ENCODE measurements at regions of chr18 and their contacts with region 1.

Region 1: DNA sequence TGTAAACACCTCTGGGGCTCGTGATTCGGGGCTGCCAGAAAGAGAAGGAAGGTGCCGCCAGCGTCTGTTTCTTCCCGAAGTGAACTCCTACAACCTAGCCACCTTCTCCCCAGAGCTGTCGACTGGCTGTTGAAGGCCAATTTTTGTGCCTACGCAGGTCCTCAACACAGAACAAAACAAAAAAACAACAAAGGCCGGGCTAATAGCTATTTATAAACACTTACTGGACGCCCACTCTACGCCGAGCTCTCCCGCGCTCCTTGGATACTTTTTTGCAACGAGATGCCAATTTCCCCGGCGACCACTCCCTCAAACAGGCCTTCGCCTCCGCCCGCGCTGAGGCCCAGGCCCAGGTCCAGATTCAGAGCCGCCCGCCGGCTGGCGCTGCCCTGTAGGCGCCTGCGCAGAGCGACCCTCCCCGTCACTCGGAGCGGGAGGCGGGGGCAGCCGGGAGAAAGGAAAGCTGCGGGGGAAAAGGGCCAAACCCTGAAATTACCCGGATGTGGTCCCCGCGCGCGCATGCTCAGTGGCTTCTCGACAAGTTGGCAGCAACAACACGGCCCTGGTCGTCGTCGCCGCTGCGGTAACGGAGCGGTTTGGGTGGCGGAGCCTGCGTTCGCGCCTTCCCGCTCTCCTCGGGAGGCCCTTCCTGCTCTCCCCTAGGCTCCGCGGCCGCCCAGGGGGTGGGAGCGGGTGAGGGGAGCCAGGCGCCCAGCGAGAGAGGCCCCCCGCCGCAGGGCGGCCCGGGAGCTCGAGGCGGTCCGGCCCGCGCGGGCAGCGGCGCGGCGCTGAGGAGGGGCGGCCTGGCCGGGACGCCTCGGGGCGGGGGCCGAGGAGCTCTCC is at the start of gene SMAD4:
- DNase-seq: peak; percentile 98
- H3K4me3 ChIP-seq: peak within 1 kb of the TSS; percentile 42 to 86 (median 74)
- H3K27ac ChIP-seq: peak within 1 kb of the TSS; percentile 95 to 99 (median 98)
- H3K4me1 ChIP-seq: peaks cover 0 to 54% (median 49%) of the 10 kb centered on the region in 4 donors
- H3K27me3 ChIP-seq: no peaks in the 10 kb centered on the region
- CTCF ChIP-seq: peak in 1 of 4 experiments; percentile 18
- EP300 ChIP-seq: peak in 1 of 4 donors; percentile 45
- POLR2A ChIP-seq: peak; percentile 92 to 93
- total RNA-seq, gene SMAD4: 106 to 143 (median 122) TPM

Region 2: DNA sequence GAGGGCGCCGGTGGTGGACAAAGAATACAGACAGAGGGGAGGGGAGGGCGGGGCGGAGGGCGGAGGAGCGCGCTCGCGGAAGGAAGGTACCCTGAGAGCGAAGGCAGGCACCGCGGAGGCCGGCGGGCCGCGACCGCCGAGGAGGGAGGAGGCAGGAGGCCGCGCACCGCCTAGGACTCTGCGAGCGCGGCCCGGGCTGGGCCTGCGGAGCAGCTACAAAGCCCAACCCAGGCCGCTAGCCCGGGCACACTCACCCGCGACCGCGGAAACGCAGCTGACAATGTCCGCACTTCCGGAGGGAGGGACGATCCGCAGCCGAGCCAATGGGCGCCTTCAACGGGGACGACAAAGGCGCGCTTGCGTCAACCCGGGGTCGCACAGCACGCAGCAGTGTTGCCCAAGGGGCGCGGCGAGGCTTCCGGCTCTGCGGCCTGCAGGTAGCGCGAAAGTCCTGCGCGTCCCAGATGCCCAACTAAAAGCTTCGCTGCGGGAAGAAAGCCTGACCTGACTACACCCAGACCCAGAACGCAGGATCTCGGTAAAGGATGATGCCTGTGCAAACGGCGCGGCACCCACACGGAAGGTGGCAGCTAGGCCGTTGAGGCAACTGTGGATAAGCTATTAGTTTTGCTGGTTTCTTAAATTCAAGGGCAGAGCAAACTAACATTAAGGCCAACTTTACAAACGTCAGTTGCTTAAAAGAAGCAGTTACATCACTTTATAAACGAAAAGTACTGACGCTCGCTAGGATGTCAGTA is 1542.8 kb before region 1 on chr18 and contains the start of gene C18orf32:
- intact Hi-C with region 1: loop called (anchors 5 kb)
- DNase-seq: peak; percentile 98
- H3K4me3 ChIP-seq: peak within 1 kb of the TSS; percentile 67 to 92 (median 86)
- H3K27ac ChIP-seq: peak within 1 kb of the TSS; percentile 93 to 98 (median 96)
- H3K4me1 ChIP-seq: peaks cover 0 to 46% (median 37%) of the 10 kb centered on the region in 4 donors
- H3K27me3 ChIP-seq: no peaks in the 10 kb centered on the region
- CTCF ChIP-seq: no peak
- EP300 ChIP-seq: no peak
- POLR2A ChIP-seq: peak; percentile 92 to 94
- total RNA-seq, gene C18orf32: 29.1 to 57.8 (median 45.8) TPM

Region 3: DNA sequence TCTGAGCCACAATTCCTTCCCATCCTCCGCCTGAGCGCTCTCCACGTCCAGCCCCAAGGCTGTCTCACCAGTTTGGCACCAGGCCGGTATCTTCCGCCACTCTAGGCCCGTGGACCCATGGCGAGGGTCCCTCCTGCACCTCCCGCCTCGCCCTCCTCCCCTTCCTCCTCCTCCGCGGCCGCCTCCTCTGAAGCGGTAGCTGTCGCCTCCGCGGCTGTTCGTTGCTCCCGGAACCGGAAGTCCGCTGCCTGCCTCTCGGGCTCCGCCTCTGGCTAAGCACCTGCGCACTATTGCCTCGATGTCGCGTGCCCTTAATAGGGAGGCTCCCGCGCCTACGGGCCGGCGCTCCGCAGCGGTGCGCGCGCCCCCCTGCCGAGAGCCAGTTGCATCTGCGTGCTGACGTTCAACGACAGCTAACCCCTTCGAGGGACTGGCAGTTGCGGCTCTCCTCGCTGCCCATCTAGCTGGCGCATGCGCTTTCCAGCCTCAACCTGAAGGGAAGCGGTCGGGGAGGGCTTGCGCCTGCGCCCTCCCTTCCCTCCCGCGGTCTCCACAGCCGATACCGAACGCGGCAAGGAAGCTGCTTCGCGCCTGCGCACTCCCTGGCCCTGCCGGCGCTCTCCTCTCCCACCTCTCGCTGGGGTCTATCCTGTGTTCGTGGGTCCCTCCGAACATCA is 748.5 kb before region 1 on chr18 and contains the start of gene MBD1:
- intact Hi-C with region 1: loop called (anchors 5 kb)
- DNase-seq: peak; percentile 99
- H3K4me3 ChIP-seq: peak within 1 kb of the TSS; percentile 74 to 99 (median 92)
- H3K27ac ChIP-seq: peak within 1 kb of the TSS; percentile 93 to 96 (median 94)
- H3K4me1 ChIP-seq: peaks cover 0 to 34% (median 29%) of the 10 kb centered on the region in 4 donors
- H3K27me3 ChIP-seq: no peaks in the 10 kb centered on the region
- CTCF ChIP-seq: peak in 2 of 4 experiments; percentile 12 to 20
- EP300 ChIP-seq: no peak
- POLR2A ChIP-seq: peak; percentile 91
- total RNA-seq, gene MBD1: 58.9 to 93.6 (median 75.5) TPM

Region 4: DNA sequence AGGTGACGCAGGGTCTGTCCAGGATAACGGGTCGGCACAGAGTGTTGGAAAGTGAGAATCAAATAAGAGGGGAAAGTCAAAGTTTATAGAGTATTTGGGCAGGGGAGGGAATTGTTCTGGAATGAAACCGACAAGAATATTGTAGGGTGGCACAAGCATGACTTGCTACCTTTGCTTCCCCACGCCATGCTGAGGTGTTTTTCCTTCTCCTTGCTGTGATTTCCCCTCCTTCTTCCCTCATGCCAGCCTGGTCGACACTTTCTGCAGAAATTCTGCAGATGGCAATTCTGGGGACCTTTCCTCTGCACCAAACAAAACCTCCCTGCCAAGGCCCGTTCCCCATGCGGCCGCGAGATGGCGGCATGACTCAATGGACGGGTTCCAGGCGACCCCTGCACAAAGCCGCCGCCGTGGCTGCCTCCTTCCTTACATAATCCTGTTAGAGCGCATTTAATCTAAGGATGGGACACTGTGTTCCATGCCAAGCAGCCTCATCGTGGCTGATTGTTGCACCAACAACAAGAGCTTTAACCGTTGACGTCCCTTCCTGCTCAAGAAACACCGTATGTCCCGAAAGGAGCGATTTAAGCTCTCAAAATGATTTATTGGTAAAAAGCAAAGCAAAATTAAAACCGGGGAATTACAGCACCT is 210.1 kb before region 1 on chr18 and contains the start of gene MRO:
- intact Hi-C with region 1: loop called (anchors 5 kb)
- DNase-seq: peak; percentile 93
- H3K4me3 ChIP-seq: peak within 1 kb of the TSS; percentile 15 to 42 (median 36)
- H3K27ac ChIP-seq: peak within 1 kb of the TSS; percentile 8 to 38 (median 26)
- H3K4me1 ChIP-seq: peaks cover 0 to 31% (median 17%) of the 10 kb centered on the region in 4 donors
- H3K27me3 ChIP-seq: no peaks in the 10 kb centered on the region
- CTCF ChIP-seq: peak; percentile 79 to 93 (median 84)
- EP300 ChIP-seq: peak in 2 of 4 donors; percentile 35 to 78
- POLR2A ChIP-seq: no peak
- total RNA-seq, gene MRO: under 0.01 to 2.5 (median 0.45) TPM

Region 5: GRCh38 chr18:50878345-50879301 is 151.3 kb before region 1 on chr18 and contains the start of gene ME2:
- intact Hi-C with region 1: loop called (anchors 1 kb)
- DNase-seq: peak; percentile 96
- H3K4me3 ChIP-seq: peak within 1 kb of the TSS; percentile 81 to 90 (median 83)
- H3K27ac ChIP-seq: peak within 1 kb of the TSS; percentile 95 to 98 (median 96)
- H3K4me1 ChIP-seq: peaks cover 0 to 20% (median 11%) of the 10 kb centered on the region in 4 donors
- H3K27me3 ChIP-seq: no peaks in the 10 kb centered on the region
- CTCF ChIP-seq: no peak
- EP300 ChIP-seq: no peak
- POLR2A ChIP-seq: peak; percentile 50 to 62
- total RNA-seq, gene ME2: 49.6 to 66.2 (median 62.6) TPM

Region 6: DNA sequence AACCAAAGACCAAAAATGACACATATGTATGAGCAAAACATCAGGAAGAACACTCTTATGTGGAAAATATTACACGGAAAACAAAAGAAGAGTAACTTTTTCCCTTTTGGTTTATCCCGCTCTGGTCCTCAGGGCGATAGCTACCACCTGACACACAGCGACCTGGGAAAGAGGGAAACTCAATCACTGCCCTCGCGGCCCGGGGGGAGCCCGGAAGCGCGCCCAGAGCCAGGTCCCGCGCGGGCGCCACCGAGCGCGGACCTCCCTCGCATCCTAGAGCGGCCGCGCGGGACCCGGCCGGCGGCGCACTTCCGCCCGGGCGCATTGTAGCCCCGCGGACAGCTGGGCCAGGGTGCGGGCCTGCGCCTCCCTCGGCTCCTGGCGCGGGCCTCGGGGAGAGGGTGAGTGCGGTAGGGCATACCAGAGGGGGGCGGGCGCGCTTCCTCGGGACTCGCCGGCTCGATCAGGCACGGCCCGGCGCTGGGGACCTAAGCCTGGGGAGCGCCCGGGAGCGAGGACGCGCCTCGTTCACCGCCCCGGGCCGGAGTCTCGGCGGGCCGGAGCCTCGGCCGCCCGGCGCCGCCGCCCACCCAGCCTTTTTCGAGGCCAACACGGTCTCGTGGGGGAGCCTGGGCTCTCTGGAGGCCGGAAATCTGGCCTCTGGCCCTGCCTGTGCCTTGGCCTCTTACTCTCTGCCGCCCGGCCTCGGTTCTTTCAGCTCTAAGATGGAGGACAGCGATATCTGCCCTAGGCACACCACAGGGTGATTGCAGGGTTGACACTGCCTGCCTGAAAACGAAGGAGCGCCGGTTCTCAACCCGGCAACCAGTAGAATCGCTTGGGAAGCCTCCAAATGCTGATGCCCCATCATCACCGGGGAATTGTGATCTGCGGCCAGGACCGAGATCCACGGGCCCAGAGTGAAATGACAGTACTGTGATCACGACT is 61.9 kb before region 1 on chr18 and contains the start of gene ELAC1:
- intact Hi-C with region 1: loop called (anchors 1 kb)
- DNase-seq: peak; percentile 89
- H3K4me3 ChIP-seq: peak within 1 kb of the TSS; percentile 73 to 99 (median 84)
- H3K27ac ChIP-seq: peak within 1 kb of the TSS; percentile 97 to 100 (median 99)
- H3K4me1 ChIP-seq: peaks cover 0 to 24% (median 17%) of the 10 kb centered on the region in 4 donors
- H3K27me3 ChIP-seq: no peaks in the 10 kb centered on the region
- CTCF ChIP-seq: no peak
- EP300 ChIP-seq: no peak
- POLR2A ChIP-seq: peak in 1 of 2 donors; percentile 57
- total RNA-seq, gene ELAC1: 3.9 to 5.8 (median 5.5) TPM

Region 7: DNA sequence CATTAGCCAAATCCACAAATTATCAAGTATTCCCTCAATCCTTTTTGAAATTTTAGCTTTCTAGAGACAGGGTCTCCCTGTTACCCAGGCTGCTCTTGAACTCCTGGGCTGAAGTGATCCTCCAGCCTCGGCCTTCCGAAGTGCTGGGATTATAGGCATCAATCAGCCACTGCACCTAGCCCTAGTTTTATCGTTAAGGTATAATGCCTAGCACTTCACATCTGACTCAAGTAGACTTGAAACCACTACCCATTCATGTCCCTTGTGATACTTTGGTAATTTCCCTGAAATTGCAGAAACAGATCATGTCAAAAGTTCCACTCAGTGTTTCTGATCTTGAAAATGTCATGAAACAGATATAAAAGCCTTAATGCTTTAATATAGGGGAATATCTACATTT is 141.3 kb after region 1 on chr18:
- intact Hi-C with region 1: no loop called
- DNase-seq: no peak
- H3K4me3 ChIP-seq: no peak overlapping the region
- H3K27ac ChIP-seq: no peak overlapping the region
- H3K4me1 ChIP-seq: no peaks in the 10 kb centered on the region
- H3K27me3 ChIP-seq: no peaks in the 10 kb centered on the region
- CTCF ChIP-seq: no peak
- EP300 ChIP-seq: no peak
- POLR2A ChIP-seq: no peak